H1 (cell line): ENCODE measurements at regions of chr17 and their contacts with region 1.

Region 1: GRCh38 chr17:44137891-44138709 is 3.6 kb upstream of the HROB start:
- DNase-seq: peak; percentile 66 to 75
- H3K4me3 ChIP-seq: peak overlapping the region in 2 of 4 experiments; percentile 23 to 33; a peak in 4 of 8 replicates
- H3K27ac ChIP-seq: peak overlapping the region; percentile 44; the same call in 1 of the 2 replicates
- H3K4me1 ChIP-seq: peaks cover 9 to 17% (median 16%) of the 10 kb centered on the region in 4 experiments
- H3K27me3 ChIP-seq: no peaks in the 10 kb centered on the region
- CTCF ChIP-seq: no peak
- EP300 ChIP-seq: no peak
- POLR2A ChIP-seq: no peak
- RAD21 ChIP-seq: no peak

Region 2: DNA sequence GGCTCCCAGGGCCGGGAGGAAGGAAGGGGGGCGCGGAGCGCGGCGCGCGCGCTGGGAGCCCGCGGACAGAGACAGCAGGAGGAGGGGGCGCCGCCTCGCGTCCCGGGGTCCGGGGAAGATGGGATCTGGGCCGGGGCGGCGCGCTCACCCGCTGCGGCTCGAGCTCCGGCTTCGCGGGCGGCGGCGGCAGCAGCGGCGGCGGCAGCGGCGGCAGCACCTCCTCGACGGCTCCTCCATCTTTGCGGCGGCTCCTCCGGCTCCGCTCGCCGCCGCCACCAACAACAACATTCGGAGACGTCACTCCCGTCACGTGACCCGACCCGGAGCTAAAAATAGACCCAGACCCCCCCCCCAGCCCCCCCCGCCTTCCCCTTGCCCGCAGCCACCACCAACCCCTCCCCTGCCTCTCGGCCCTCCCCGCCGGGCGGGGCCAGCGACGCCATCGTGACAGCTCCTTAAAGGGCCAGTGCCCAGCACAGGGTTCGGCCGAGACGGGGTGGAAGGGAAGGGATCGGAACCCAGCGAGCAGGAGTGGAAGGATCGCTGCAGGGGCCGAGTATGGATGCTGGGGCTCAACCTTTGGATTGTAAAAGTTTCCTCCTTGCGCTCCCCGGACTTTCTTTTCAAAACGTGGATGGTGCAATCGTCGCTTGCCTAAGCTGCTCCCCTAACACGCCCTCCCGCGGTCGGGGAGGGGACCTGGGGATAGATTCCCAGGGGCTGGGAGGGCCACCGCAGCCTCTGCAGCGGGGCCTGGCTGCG is 14.6 kb before region 1 on chr17 and contains the start of gene HDAC5:
- CTCF ChIA-PET with region 1: interaction called, 19 read pairs
- POLR2A ChIA-PET with region 1: interaction called, 13 read pairs
- DNase-seq: peak; percentile 72 to 93
- H3K4me3 ChIP-seq: peak within 1 kb of the TSS; percentile 77 to 99 (median 88)
- H3K27ac ChIP-seq: peak within 1 kb of the TSS; percentile 89
- H3K4me1 ChIP-seq: peaks cover 14 to 26% (median 18%) of the 10 kb centered on the region in 4 experiments
- H3K27me3 ChIP-seq: no peaks in the 10 kb centered on the region
- CTCF ChIP-seq: peak; percentile 19 to 57 (median 52); a peak in 3 of 4 replicates
- EP300 ChIP-seq: no peak
- POLR2A ChIP-seq: peak in 1 of 2 experiments; percentile 38; a peak in 2 of 3 replicates
- RAD21 ChIP-seq: peak; percentile 11 to 25; a peak in 2 of 4 replicates
- total RNA-seq, gene HDAC5: 48.5 and 54.0 TPM in 2 replicates

Region 3: DNA sequence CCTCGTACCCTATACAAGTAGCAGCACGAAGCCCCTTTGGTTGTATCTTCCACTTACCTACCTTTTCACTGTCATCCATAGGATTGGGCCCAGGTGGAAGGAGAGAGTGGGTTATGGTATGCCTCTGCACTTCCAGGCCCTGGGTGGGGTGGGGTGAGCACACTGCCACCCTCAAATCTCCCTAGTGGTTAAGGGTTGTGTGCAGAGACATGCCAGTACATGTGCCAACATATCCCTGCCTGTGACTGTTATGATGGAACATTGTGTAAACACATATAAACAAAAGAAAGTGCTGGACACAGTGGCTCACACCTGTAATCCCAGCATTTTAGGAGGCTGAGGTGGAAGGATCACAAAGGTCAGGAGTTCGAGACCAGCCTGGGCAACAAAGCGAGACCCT is 14.8 kb after region 1 on chr17:
- CTCF ChIA-PET with region 1: interaction called, 10 read pairs
- POLR2A ChIA-PET with region 1: no interaction called
- DNase-seq: no peak
- H3K4me3 ChIP-seq: no peak overlapping the region
- H3K27ac ChIP-seq: no peak overlapping the region
- H3K4me1 ChIP-seq: no peaks in the 10 kb centered on the region
- H3K27me3 ChIP-seq: no peaks in the 10 kb centered on the region
- CTCF ChIP-seq: no peak
- EP300 ChIP-seq: no peak
- POLR2A ChIP-seq: no peak
- RAD21 ChIP-seq: no peak